ENCODE measurements at regions of chr7 and their contacts with region 1.

Region 1: DNA sequence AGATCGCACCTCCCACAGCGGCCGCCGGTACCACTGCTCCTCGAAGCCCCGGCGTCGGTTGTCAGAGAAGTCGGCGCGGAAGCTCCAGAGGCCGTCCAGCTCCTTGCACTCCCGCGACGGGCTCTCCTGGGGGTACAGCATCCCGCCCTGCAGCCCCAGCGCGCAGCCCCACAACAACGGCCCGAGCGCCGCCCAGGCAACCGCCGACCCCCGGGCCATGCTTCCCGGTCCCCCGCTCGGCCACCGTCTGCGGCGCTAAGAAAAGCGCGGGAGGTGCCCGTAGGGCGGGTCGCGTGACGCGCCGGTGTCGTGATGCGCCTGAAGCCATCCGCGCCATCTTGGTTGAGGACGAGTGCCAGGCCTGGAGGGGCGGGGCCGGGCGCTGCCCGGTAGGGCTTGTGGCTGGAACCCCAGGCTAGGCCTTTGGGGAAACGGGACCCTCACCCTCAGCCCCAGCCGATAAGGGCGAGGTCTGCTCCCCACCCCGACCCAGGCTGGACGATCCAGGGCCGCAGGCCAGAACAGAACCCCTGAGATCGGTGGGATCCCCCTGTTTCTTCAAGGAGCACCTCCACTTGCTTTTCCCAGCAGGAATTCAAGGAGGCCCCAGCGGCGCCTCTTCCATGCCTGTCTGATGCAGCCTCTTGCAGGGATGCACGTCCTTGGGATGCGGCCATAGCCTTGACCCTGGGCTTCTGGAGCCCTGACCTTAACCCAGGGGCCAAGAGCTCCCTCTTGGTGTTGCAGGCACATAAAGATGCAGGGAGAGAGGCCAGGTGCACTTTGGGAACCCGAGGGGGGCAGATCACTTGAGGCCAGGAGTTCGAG is at the start of gene GUSB:
- H3K4me3 Mint-ChIP-seq: peak within 1 kb of the TSS; percentile 82
- H3K27ac Mint-ChIP-seq: peak within 1 kb of the TSS; percentile 87
- H3K4me1 Mint-ChIP-seq: peaks cover 10% of the 10 kb centered on the region
- H3K27me3 Mint-ChIP-seq: no peaks in the 10 kb centered on the region

Region 2: DNA sequence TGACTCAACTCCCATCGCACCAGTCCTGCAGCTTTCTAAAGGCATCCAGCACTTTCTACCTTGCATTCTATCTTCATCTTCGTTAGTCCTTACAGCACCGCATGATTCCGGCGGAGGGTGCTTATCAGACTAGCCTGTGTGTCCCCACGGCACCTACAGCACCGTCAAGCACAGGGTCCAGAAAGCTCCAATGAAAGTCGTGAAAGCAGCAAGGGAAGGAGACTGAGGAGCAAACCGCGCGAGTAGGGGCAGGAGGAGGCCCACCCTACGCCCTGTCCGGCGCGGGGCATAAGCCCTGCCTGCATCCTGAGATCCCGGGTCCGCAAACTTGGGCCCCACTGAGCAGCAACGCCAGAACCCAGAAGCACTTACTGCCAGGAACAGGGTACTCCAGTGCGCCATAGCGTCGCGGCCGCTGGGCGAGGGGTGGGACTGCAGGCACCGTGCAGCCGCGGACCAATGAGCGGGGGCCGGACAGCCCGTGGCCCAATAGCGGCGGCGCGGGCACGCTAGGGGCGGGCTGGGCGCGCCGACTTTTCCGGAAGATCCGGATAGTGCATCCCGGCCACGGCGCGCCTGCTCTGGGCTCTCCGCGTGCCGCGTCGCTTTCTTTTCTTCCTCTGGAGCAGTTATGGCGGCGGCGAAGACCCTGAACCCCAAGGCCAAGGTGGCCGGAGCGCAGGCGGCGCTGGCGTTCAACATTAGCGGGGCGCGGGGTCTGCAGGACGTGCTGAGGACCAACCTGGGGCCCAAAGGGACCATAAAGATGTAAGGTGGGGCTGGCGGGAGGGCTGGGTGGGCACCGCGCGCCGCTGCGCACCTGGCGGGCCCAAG is 231.5 kb before region 1 on chr7:
- intact Hi-C with region 1: loop called (anchors 2 kb)
- H3K4me3 Mint-ChIP-seq: peak overlapping the region; percentile 90
- H3K27ac Mint-ChIP-seq: peak overlapping the region; percentile 82
- H3K4me1 Mint-ChIP-seq: no peaks in the 10 kb centered on the region
- H3K27me3 Mint-ChIP-seq: no peaks in the 10 kb centered on the region

Region 3: DNA sequence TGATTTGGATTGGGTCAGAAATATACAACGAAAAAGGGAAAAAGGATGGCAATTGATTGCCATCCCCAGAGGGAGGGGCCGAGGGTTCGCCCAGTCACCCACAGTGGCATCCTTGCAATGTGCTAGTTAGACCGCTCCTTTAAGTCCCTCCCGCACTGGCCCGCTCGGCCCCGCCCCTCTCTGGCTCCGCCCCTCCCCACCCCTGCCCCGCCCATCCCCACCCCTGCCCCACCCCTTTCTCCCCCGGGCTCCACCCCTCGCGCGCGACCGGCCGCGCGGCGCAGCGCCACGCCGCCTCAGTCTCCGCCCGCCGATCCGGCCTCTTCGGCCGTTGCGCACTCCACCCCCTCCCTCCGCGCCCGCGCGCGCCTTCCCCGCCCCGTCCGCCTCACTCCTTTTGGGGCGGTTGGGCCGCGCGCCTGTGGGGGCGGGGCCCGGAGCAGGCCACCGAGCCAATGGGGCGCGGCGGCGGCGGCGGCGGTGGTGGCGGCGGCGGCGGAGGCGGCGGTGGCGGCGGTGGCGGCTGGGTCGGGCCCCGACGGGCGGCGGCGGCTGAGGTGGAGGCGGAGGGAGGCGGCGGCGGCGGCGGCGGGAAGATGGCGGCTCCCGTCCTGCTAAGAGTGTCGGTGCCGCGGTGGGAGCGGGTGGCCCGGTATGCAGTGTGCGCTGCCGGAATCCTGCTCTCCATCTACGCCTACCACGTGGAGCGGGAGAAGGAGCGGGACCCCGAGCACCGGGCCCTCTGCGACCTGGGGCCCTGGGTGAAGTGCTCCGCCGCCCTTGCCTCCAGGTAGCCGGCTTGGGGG is 109.2 kb before region 1 on chr7 and contains the start of gene VKORC1L1:
- intact Hi-C with region 1: loop called (anchors 5 kb)
- H3K4me3 Mint-ChIP-seq: peak within 1 kb of the TSS; percentile 81
- H3K27ac Mint-ChIP-seq: peak within 1 kb of the TSS; percentile 72
- H3K4me1 Mint-ChIP-seq: peaks cover 25% of the 10 kb centered on the region
- H3K27me3 Mint-ChIP-seq: no peaks in the 10 kb centered on the region

Region 4: GRCh38 chr7:66075590-66076461 is 93.6 kb after region 1 on chr7 and contains the start of gene ASL:
- intact Hi-C with region 1: loop called (anchors 10 kb)
- H3K4me3 Mint-ChIP-seq: peak within 1 kb of the TSS; percentile 78
- H3K27ac Mint-ChIP-seq: peak within 1 kb of the TSS; percentile 62
- H3K4me1 Mint-ChIP-seq: peaks cover 16% of the 10 kb centered on the region
- H3K27me3 Mint-ChIP-seq: peaks cover 2% of the 10 kb centered on the region

Region 5: GRCh38 chr7:66114793-66115649 is 132.8 kb after region 1 on chr7 and contains the start of gene CRCP:
- intact Hi-C with region 1: loop called (anchors 10 kb)
- H3K4me3 Mint-ChIP-seq: peak within 1 kb of the TSS; percentile 87
- H3K27ac Mint-ChIP-seq: peak within 1 kb of the TSS; percentile 97
- H3K4me1 Mint-ChIP-seq: peaks cover 33% of the 10 kb centered on the region
- H3K27me3 Mint-ChIP-seq: no peaks in the 10 kb centered on the region

Region 6: DNA sequence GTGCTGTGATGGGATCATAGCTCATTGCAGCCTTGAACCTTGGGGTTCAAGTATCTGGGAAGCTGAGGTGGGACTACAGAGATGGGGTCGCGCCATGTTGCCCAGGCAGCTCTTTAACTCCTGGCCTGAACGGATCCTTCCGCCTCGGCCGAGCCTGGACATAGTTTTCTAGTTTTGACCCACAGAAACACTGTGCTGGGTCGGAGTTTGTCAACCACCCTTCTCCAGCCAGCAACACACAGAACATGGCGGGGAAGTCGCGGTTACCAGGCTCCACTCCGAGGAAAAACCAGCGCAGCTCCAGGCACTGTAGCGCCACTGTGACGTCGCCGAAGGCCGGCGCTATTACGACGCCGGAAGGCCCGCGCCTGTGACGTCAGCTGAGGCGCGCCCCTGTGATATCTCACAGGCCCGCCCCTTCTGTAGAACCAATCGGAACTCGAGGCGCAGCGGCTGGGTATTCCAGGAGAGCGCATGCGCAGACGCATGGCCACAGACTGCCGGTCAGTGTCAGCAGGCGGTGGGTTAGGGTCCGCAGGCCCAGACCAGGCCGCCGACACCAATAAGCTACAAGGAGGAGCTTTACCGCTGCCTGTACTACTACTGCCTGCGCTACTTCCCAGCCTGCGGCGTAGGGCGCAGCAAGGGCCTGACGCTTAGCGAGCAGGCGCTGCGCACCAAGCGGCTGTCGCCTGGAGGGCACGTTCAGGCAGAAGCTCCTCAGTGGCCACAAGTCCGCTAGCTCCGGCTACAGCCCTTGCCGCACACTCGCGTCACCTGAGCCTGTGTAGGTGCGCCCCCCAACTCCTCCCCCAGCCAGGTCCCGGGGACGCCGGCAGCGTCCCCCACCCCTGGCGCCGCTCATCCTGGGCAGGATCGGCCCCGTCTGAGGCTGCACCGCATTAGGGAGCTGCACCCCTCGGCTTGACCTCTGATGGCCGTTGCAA is 511.3 kb after region 1 on chr7:
- intact Hi-C with region 1: loop called (anchors 5 kb)
- H3K4me3 Mint-ChIP-seq: peak overlapping the region; percentile 84
- H3K27ac Mint-ChIP-seq: peak overlapping the region; percentile 98
- H3K4me1 Mint-ChIP-seq: peaks cover 25% of the 10 kb centered on the region
- H3K27me3 Mint-ChIP-seq: peaks cover 1% of the 10 kb centered on the region

Region 7: DNA sequence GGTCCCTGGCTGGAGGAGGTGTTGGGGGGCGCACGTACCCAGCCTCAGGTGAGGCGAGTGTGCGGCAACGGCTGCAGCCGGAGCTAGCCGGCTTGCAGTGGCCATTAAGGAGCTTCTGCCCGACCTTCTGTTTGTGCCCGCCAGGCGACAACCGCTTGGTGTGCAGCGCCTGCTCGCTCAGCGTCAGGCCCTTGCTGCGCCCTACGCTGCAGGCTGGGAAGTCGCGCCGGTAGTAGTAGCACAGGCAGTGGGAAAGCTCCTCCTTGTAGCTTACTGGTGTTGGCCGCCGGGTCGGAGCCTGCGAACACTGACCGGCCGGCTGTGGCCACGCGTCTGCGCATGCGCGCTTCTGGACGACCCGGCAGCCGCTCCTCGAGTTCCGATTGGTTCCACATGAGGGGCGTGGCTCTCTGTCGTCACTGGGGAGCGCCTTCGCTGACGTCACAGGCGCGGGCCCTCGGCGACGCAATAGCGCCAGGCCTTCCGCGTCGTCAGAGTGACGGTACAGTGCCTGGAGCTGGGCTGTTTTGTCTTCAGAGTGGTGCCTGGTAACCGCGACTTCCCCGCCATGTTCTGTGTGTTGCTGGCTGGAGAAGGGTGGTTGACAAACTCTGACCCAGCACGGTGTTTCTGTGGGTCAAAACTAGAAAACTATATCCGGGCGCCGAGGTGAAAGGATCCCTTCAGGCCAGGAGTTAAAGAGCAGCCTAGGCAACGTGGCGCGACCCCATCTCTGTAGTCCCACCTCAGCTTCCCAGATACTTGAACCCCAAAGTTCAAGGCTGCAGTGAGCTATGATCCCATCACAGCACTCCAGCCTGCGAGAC is 862.6 kb after region 1 on chr7:
- intact Hi-C with region 1: loop called (anchors 5 kb)
- H3K4me3 Mint-ChIP-seq: peak overlapping the region; percentile 87
- H3K27ac Mint-ChIP-seq: peak overlapping the region; percentile 97
- H3K4me1 Mint-ChIP-seq: peaks cover 35% of the 10 kb centered on the region
- H3K27me3 Mint-ChIP-seq: no peaks in the 10 kb centered on the region